Activated naive CD8-positive, alpha-beta T cell treated with anti-CD3 and anti-CD28 coated beads, Interleukin-2, amount 10 ng/mL, durations not matched to agents 7 days and 5 days (primary cell): ENCODE measurements at regions of chr2 and their contacts with region 1.

Region 1: GRCh38 chr2:84781942-84782716 is 98.8 kb downstream of the TRABD2A start:
- DNase-seq: peak; percentile 48
- ATAC-seq: peak; percentile 93
- H3K4me3 Mint-ChIP-seq: peak overlapping the region; percentile 71
- H3K27ac Mint-ChIP-seq: peak overlapping the region; percentile 93
- H3K4me1 Mint-ChIP-seq: peaks cover 59% of the 10 kb centered on the region
- H3K27me3 Mint-ChIP-seq: no peaks in the 10 kb centered on the region

Region 2: DNA sequence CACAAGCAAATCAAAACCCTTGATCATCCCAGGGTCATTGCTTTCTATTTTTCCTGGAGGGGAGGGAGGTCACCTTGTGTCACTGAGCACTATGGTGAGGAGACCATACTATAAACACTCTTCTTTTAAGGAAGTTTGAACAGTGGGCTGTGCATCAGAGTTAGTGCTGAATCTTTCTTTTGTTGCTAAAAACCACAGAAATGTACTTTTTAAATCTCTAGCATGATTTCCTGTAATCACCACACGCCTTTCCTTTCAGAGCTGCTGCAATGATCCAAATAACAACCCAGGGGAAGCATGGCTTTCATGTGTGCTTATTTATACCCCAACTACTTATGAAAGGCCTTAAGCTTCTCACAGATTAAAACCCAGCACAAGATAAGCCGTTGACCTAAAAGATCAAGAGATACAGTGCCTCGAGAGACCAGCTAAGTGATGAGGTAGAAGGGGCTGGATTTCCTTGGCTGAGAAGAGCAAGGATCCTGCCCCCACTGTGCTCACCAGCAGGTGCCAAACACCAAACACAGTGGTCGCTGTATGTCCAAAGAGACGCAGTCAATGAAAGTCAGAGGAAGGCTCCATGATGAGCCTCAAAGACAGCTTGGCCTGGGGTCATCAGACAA is 64.0 kb after region 1 on chr2:
- POLR2A ChIA-PET with region 1: interaction called, 11 read pairs
- DNase-seq: no peak
- ATAC-seq: peak; percentile 78
- H3K4me3 Mint-ChIP-seq: peak overlapping the region; percentile 69
- H3K27ac Mint-ChIP-seq: peak overlapping the region; percentile 93
- H3K4me1 Mint-ChIP-seq: peaks cover 84% of the 10 kb centered on the region
- H3K27me3 Mint-ChIP-seq: no peaks in the 10 kb centered on the region

Region 3: GRCh38 chr2:84925724-84926376 is 143.7 kb after region 1 on chr2:
- POLR2A ChIA-PET with region 1: no interaction called
- DNase-seq: peak; percentile 99
- ATAC-seq: peak; percentile 88
- H3K4me3 Mint-ChIP-seq: peak overlapping the region; percentile 96
- H3K27ac Mint-ChIP-seq: peak overlapping the region; percentile 85
- H3K4me1 Mint-ChIP-seq: peaks cover 27% of the 10 kb centered on the region
- H3K27me3 Mint-ChIP-seq: no peaks in the 10 kb centered on the region